ENCODE measurements at regions of chr1 and their contacts with region 1.

Region 1: GRCh38 chr1:109483672-109484518 is at the start of gene ATXN7L2:
- DNase-seq: peak; percentile 84 to 91
- ATAC-seq: peak; percentile 84 to 89
- H3K4me3 ChIP-seq: peak within 1 kb of the TSS; percentile 73 to 79 (median 74)
- H3K27ac ChIP-seq: peak within 1 kb of the TSS; percentile 90 to 100 (median 97)
- H3K4me1 ChIP-seq: peaks cover 46 to 47% of the 10 kb centered on the region in 2 donors
- H3K27me3 ChIP-seq: no peaks in the 10 kb centered on the region
- CTCF ChIP-seq: peak in 1 of 5 experiments; percentile 34
- POLR2A ChIP-seq: peak; percentile 58 to 60
- total RNA-seq, gene ATXN7L2: 2.1 to 12.1 (median 6.5) TPM

Region 2: GRCh38 chr1:109248797-109249642 is 234.9 kb before region 1 on chr1 and contains the start of gene CELSR2:
- in situ Hi-C with region 1: no loop called
- intact Hi-C with region 1: loop called (anchors 1 kb)
- DNase-seq: peak; percentile 1 to 45
- ATAC-seq: peak; percentile 76 to 77
- H3K4me3 ChIP-seq: peak within 1 kb of the TSS; percentile 47 to 58 (median 52)
- H3K27ac ChIP-seq: no peak within 1 kb of the TSS
- H3K4me1 ChIP-seq: peaks cover 19 to 25% of the 10 kb centered on the region in 2 donors
- H3K27me3 ChIP-seq: no peaks in the 10 kb centered on the region
- CTCF ChIP-seq: no peak
- POLR2A ChIP-seq: peak; percentile 25 to 32
- total RNA-seq, gene CELSR2: 5.8 to 12.5 (median 7.9) TPM

Region 3: GRCh38 chr1:109509176-109510134 is 25.6 kb after region 1 on chr1 and contains the start of gene AMIGO1:
- in situ Hi-C with region 1: no loop called
- intact Hi-C with region 1: loop called (anchors 2 kb)
- DNase-seq: peak in 1 of 2 donors; percentile 54
- ATAC-seq: peak; percentile 80 to 83
- H3K4me3 ChIP-seq: peak within 1 kb of the TSS; percentile 56 to 88 (median 70)
- H3K27ac ChIP-seq: peak within 1 kb of the TSS; percentile 86 to 89 (median 87)
- H3K4me1 ChIP-seq: peaks cover 11 to 39% of the 10 kb centered on the region in 2 donors
- H3K27me3 ChIP-seq: no peaks in the 10 kb centered on the region
- CTCF ChIP-seq: no peak
- POLR2A ChIP-seq: peak; percentile 10 to 36
- total RNA-seq, gene AMIGO1: 8.6 to 20.9 (median 15.1) TPM

Measured in gastrocnemius medialis (tissue), 4 donors.